PC-9 (cell line): ENCODE measurements at regions of chr19 and their contacts with region 1.

Region 1: GRCh38 chr19:57527136-57527881 is at the start of gene ZNF549:
- DNase-seq: peak; percentile 92 to 94
- H3K4me3 ChIP-seq: peak within 1 kb of the TSS; percentile 86
- H3K27ac ChIP-seq: peak within 1 kb of the TSS; percentile 38
- H3K4me1 ChIP-seq: no peaks in the 10 kb centered on the region; the same call in 1 of the 2 replicates
- H3K27me3 ChIP-seq: no peaks in the 10 kb centered on the region
- CTCF ChIP-seq: no peak
- total RNA-seq, gene ZNF549: 5.2 and 6.5 TPM in 2 replicates

Region 2: DNA sequence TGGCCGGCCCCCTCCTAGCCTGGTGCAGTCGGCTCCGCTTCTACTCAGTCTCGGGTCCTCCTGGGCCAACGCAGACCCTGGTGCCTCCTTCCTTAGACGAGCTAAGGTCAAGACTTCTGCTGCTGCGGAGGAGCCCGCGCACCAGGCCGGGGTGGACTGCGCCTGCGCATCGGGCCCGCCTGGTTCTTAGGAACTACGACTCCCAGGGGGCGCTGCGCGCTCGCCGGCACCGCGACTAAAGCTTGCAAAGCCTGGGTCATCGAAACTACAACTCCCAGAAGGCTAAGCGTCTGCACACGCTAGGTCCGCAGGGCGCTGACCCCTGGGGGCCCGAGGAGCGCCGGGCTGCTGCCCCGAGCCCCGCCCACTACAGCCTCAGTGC is 855.7 kb before region 1 on chr19 and contains the start of gene ZNF835:
- CTCF ChIA-PET with region 1: no interaction called
- POLR2A ChIA-PET with region 1: no interaction called
- intact Hi-C with region 1: no loop called
- DNase-seq: no peak
- H3K4me3 ChIP-seq: no peak within 1 kb of the TSS
- H3K27ac ChIP-seq: no peak within 1 kb of the TSS
- H3K4me1 ChIP-seq: no peaks in the 10 kb centered on the region
- H3K27me3 ChIP-seq: peaks cover 12% of the 10 kb centered on the region
- CTCF ChIP-seq: no peak
- total RNA-seq, gene ZNF835: not detected in 2 replicates

Region 3: DNA sequence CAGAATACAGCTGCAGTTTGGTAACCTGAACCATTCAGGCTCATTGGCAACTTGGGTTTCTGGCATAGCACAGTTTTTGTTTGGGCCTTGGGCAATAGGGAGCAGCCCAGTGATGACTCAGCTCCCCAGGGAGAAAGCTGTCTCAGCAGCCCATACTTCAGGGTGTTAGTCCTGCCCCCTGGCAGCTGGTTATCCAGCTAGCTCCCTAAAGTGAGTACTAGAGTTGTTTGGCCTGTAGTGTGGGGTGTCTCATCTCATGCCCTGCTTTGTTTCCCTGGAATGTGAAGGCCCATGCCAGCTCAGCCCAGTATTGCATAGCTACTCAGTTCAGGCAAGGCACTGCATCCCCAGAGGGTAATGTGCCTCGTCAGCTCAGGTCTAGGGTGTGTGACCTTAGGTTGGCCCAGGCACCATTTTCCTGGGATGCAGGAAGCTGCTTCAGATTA is 225.3 kb before region 1 on chr19:
- CTCF ChIA-PET with region 1: no interaction called
- POLR2A ChIA-PET with region 1: no interaction called
- intact Hi-C with region 1: no loop called
- DNase-seq: peak; percentile 89 to 95
- H3K4me3 ChIP-seq: no peak overlapping the region
- H3K27ac ChIP-seq: peak overlapping the region; percentile 59
- H3K4me1 ChIP-seq: peaks cover 26% of the 10 kb centered on the region
- H3K27me3 ChIP-seq: no peaks in the 10 kb centered on the region
- CTCF ChIP-seq: no peak

Region 4: DNA sequence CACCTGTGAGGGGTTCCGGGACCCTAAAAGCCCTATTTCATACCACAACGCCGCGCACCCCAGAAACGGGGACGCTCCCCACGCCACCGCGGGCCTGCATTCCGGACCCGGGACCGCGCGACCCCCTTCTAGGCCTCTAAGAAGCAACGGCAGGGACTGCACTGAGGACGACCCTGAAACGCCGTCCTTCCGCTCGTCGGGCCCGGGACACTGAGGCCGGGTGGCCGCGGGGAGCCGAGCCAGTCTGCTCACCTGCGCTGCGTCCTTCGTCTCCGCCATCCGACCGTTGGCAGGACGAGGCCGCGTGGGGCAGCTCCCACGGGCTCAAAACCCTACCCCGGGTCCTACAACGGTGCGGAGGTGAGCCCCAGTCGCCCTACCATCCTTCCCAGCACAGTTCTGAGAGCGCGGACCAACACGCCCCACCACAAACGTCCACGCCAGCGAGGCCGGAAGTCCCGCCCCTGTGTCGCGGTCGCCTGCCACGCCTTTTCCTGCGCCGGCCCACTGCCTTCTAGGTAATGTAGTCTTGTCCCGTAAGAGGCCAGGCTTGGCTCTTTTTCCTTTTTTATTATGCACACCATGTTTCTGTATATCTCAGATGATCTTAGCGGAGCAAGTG is 32.2 kb after region 1 on chr19 and contains the start of gene ZNF550:
- CTCF ChIA-PET with region 1: no interaction called
- POLR2A ChIA-PET with region 1: no interaction called
- intact Hi-C with region 1: loop called (anchors 2 kb)
- DNase-seq: peak; percentile 83 to 93
- H3K4me3 ChIP-seq: peak within 1 kb of the TSS; percentile 90
- H3K27ac ChIP-seq: peak within 1 kb of the TSS; percentile 83
- H3K4me1 ChIP-seq: peaks cover 13% of the 10 kb centered on the region
- H3K27me3 ChIP-seq: no peaks in the 10 kb centered on the region; the same call in 1 of the 2 replicates
- CTCF ChIP-seq: no peak
- total RNA-seq, gene ZNF550: 18.2 and 19.8 TPM in 2 replicates